Adrenal gland (tissue), 19 donors: ENCODE measurements at regions of chr1 and their contacts with region 1.

Region 1: GRCh38 chr1:47192458-47193384 is 2.9 kb upstream of the PDZK1IP1 start:
- DNase-seq: peak; percentile 67 to 88 (median 78)
- H3K4me3 ChIP-seq: no peak overlapping the region
- H3K27ac ChIP-seq: no peak overlapping the region
- H3K4me1 ChIP-seq: peaks cover 6 to 8% of the 10 kb centered on the region in 2 donors
- H3K27me3 ChIP-seq: no peaks in the 10 kb centered on the region
- CTCF ChIP-seq: peak; percentile 84 to 95 (median 88)
- POLR2A ChIP-seq: no peak

Region 2: GRCh38 chr1:47262787-47263413 is 70.2 kb after region 1 on chr1:
- intact Hi-C with region 1: loop called in 1 of 2 experiments (anchors 5 kb)
- DNase-seq: peak; percentile 21 to 73 (median 32)
- H3K4me3 ChIP-seq: no peak overlapping the region
- H3K27ac ChIP-seq: no peak overlapping the region
- H3K4me1 ChIP-seq: no peaks in the 10 kb centered on the region
- H3K27me3 ChIP-seq: no peaks in the 10 kb centered on the region
- CTCF ChIP-seq: peak; percentile 20 to 75 (median 68)
- POLR2A ChIP-seq: no peak

Region 3: DNA sequence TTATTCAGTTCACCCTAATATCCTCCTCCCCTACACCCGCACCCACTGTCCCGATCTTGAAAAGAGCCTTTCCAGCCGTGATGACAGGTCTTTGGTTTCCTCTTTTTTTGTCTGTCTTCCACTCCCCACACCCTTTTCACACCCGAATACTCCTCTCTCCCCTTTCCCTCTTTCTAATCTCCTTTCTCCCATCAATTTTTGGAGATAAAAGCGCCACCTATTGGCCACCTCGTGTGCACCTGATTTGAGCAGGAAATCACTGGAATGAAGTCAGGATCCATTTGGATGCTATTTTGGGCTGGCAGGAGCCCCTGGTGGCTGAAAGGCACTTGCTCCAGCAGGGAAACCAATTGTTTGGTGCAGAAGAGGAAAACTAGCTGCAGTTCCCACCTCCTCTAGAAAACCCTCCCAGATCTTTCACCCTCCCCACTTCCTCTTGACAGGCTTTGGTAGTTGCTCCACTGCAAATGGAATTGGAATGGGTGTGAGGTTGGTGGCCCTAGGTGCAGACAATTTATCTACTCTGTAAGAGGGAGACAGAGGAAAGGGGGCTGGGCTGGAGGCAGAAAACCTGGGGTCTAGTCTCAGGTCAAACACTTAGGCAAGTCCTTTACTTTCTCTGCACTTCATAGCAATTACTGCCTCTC is 231.7 kb after region 1 on chr1:
- intact Hi-C with region 1: loop called in 1 of 2 experiments (anchors 5 kb)
- DNase-seq: peak in 4 of 7 donors; percentile 30 to 47 (median 40)
- H3K4me3 ChIP-seq: no peak overlapping the region
- H3K27ac ChIP-seq: no peak overlapping the region
- H3K4me1 ChIP-seq: no peaks in the 10 kb centered on the region
- H3K27me3 ChIP-seq: no peaks in the 10 kb centered on the region
- CTCF ChIP-seq: peak; percentile 45 to 64 (median 58)
- POLR2A ChIP-seq: no peak

Region 4: GRCh38 chr1:47437447-47438164 is 244.9 kb after region 1 on chr1 and contains the start of gene FOXD2:
- intact Hi-C with region 1: loop called in 1 of 2 experiments (anchors 10 kb)
- DNase-seq: peak; percentile 81 to 89 (median 84)
- H3K4me3 ChIP-seq: peak within 1 kb of the TSS in 3 of 4 donors; percentile 30 to 74 (median 52)
- H3K27ac ChIP-seq: peak within 1 kb of the TSS in 4 of 5 donors; percentile 65 to 92 (median 80)
- H3K4me1 ChIP-seq: peaks cover 0 to 21% of the 10 kb centered on the region in 2 donors
- H3K27me3 ChIP-seq: peaks cover 57% of the 10 kb centered on the region
- CTCF ChIP-seq: peak; percentile 80 to 100 (median 98)
- POLR2A ChIP-seq: peak in 1 of 2 donors; percentile 26
- total RNA-seq, gene FOXD2: 0.53 to 3.3 (median 1.3) TPM

Region 5: GRCh38 chr1:47725992-47726855 is 533.5 kb after region 1 on chr1:
- intact Hi-C with region 1: loop called (anchors 10 kb)
- DNase-seq: peak; percentile 68 to 90 (median 83)
- H3K4me3 ChIP-seq: no peak overlapping the region
- H3K27ac ChIP-seq: no peak overlapping the region
- H3K4me1 ChIP-seq: no peaks in the 10 kb centered on the region
- H3K27me3 ChIP-seq: peaks cover 23% of the 10 kb centered on the region
- CTCF ChIP-seq: peak; percentile 77 to 93 (median 86)
- POLR2A ChIP-seq: no peak

Region 6: DNA sequence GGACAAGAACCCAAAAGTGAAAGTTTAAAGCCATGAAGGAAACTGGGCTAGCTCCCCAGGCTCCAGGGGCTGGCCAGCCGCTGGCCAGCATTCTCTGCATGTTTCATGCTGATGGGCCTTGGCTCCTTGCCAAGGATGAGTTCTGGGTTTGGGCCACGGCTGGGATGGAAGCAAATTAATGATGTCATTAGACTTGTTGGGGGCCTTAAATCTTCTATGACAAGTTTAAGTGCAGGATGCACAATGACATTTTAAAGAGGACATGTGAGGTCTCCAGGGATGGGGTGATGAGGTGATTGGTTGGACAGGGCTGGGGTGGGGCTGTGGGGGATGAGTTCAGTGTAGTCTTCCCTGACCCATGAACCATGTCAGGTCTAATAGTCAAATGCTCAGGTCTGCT is 604.9 kb after region 1 on chr1:
- intact Hi-C with region 1: no loop called
- DNase-seq: peak in 5 of 7 donors; percentile 7 to 58 (median 27)
- H3K4me3 ChIP-seq: no peak overlapping the region
- H3K27ac ChIP-seq: no peak overlapping the region
- H3K4me1 ChIP-seq: no peaks in the 10 kb centered on the region
- H3K27me3 ChIP-seq: no peaks in the 10 kb centered on the region
- CTCF ChIP-seq: no peak
- POLR2A ChIP-seq: no peak